ENCODE measurements at regions of chr16 and their contacts with region 1.

Region 1: DNA sequence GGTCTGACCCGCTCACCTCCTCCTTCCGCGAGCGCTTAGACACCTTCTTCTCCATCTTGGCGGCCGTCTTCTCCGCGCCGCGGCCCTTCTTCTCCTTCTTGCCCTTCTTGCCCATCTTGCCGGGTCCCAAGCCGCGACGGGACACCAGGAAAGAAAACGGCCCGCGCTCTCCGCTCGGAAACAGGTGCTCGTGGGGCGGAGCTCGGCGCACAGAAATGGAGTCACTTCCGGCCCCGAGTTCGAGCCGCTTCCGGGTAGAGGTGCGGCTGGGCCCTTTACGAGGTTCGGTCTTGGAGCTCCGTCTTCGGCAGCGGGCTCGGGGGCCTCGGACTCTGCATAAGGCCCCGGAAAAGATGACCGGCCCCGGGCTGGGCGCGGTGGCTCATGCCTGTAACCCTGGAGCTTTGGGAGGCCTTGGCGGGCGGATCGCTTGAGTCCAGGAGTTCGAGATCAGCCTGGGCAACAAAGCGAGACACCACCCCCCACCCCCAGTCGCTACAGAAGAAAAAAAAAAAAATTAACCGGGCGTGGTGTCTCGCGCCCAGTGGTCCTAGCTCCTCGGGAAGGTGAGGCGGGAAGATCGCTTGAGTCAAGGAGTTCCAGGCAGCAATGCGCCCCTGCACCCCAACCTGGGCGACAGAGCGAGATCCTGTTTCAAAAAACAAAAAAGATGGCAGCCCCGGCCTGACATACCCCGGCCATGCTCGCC is at the start of gene KLHDC4:
- DNase-seq: peak; percentile 90
- H3K4me3 Mint-ChIP-seq: peak within 1 kb of the TSS; percentile 100
- H3K27ac Mint-ChIP-seq: peak within 1 kb of the TSS; percentile 100
- H3K4me1 Mint-ChIP-seq: peaks cover 30% of the 10 kb centered on the region
- H3K27me3 Mint-ChIP-seq: peaks cover 1% of the 10 kb centered on the region
- total RNA-seq, gene KLHDC4: 85.6 and 93.7 TPM in 2 replicates

Region 2: DNA sequence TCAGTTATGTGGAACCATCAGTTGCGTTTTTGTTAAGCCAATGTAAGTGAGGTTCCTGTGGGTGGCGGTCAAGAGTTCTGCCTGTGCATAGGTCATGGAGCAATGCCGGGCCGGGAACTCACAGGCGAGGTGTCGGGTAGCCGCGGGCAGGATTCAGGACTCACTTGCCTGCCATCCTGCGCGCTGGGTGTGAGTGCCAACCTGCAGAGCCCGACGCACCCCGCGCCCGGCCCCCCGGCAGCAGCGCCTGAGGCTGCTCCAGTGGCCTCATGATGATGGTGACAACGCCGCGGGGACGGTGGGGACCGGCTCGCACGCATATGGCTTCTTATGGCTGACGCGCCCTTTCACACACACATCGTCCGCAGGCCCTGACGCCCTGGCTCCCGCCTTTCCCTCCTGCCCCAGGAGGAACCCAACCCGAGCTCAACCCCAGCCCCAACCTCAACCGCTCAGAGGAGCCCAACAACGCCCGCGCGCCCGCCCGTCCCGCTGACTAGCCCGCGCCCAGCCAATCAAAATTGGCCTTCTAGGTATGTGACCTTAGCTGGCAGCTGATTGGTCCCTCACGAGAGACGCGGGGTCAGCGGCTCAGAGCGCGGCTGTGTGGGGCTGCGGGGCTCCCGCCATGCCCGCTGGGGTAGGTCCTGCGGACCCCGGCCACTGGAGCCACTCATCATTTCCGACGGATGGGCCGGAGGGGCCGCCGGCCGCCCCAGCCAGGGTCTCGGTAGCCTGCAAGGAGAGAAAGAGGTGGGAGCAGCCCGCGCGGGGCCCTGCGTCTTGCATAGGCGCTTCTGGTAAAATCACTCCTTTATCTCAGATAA is 448.8 kb before region 1 on chr16 and contains the start of gene C16orf95:
- intact Hi-C with region 1: loop called (anchors 5 kb)
- DNase-seq: peak; percentile 95
- H3K4me3 Mint-ChIP-seq: peak within 1 kb of the TSS; percentile 94
- H3K27ac Mint-ChIP-seq: peak within 1 kb of the TSS; percentile 99
- H3K4me1 Mint-ChIP-seq: peaks cover 17% of the 10 kb centered on the region
- H3K27me3 Mint-ChIP-seq: no peaks in the 10 kb centered on the region
- total RNA-seq, gene C16orf95: 9.9 and 10.9 TPM in 2 replicates

Region 3: DNA sequence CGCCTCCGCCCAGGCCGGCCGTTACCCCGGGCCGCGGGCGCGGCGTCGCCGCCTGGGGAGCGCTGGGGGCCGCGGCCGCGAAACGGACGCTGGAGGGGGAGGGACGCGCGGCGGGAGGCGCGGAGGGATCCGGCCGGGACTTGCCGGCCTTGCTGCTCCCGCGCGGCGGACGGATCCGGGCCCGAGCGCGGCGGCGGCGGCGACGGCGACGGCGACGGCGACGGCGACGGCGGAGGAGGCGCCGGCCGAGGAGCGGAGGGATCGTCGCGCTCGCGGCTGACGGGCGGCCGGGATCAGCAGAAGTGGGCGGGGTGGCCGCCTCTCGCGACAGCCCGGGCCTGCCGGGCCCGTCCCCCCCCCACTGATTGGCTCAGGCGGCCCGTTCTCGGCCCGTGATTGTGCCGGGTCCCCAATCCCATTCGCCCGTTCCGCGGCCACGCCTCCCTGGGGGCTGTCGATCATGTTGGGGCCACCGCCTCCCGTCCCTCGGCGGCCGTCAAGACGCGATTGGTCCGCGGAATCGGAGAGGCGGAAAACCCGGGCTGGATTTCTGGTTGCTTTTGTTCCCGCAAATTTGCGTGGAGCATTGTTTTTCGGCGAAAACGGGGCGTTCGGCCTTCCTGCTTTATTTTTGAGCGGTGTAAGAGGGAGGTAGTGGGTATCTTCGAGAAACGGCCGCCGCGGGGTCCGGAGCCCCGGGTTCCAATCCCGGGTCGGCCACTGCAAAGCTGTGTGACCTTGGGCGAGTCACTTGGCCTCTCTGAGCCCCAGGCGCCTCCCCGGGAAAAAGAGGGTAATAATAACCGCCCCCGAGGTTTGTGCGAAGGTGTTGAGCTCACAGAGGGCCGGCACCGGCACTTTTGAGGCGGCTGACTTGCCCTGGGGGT is 273.0 kb before region 1 on chr16 and contains the start of gene ZCCHC14:
- intact Hi-C with region 1: loop called (anchors 2 kb)
- DNase-seq: peak; percentile 98
- H3K4me3 Mint-ChIP-seq: peak within 1 kb of the TSS; percentile 80
- H3K27ac Mint-ChIP-seq: peak within 1 kb of the TSS; percentile 82
- H3K4me1 Mint-ChIP-seq: peaks cover 53% of the 10 kb centered on the region
- H3K27me3 Mint-ChIP-seq: peaks cover 34% of the 10 kb centered on the region
- total RNA-seq, gene ZCCHC14: 9.9 and 11.0 TPM in 2 replicates

Region 4: DNA sequence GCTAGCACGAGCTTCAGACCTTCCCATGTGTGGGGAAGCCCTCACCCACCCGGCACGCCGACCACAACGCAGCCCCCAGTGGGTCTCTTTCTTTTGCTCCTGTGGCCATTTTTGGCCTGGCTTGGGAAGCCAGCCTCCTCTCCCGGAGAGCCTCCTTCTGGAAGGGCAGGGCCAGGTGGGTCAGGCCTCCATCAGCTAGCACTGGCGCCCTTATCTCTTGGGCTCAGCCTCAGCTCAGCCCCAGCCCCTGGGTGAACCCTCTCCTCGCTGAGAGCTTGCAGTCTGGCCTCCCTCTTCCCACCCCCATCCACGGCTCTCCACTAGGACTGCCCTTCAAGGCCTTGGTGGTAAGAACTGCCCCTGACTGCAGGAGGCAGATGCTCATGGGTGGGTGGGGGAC is 178.3 kb before region 1 on chr16:
- intact Hi-C with region 1: loop called (anchors 2 kb)
- DNase-seq: no peak
- H3K4me3 Mint-ChIP-seq: no peak overlapping the region
- H3K27ac Mint-ChIP-seq: no peak overlapping the region
- H3K4me1 Mint-ChIP-seq: no peaks in the 10 kb centered on the region
- H3K27me3 Mint-ChIP-seq: peaks cover 7% of the 10 kb centered on the region

Region 5: DNA sequence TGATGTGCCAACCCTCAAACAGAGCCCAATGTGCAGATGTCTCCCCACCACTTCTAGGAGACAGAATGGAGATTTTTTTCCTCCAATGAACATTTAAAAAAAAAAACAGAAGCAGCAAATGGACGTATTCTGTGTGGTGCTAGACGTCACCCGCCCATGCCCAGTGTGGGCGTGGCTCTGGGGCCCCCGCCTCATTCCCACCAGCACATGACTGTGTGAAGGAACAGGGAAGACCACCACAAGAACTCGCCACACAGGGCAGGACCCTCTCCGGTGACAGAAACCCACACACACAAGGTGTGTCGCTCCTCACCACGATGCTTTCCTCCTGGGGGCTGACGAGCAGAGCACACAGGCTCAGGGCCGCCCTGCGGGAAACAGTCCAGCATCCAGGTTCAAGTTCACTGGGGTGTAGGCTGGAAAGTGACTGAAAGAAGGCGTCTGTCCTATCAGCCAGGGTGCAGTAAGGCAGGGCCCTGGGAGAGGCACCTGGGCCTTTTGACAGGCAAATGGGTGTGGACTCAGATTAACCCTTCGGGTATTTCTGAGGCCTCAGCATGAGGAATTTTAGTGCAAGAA is 53.7 kb before region 1 on chr16:
- intact Hi-C with region 1: no loop called
- DNase-seq: no peak
- H3K4me3 Mint-ChIP-seq: no peak overlapping the region
- H3K27ac Mint-ChIP-seq: no peak overlapping the region
- H3K4me1 Mint-ChIP-seq: peaks cover 3% of the 10 kb centered on the region
- H3K27me3 Mint-ChIP-seq: no peaks in the 10 kb centered on the region

Region 6: DNA sequence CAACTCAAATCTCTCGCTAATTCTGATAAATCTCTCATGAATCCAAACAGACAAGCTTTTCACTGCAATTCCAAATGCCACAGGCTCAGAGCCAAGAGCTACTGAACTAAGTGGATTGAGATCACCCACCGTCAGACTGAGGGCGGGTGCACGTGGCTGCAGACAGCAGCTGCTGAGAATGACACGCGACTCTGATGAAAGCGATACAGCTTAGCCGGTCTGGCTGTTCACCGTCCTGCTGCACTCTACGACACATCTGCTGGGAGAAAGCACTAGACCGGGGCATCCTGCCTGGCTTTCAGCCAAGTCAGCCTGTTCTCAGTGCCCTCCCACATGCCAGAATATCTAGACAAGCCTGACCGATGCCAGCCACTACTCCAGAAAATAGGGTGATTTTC is 42.7 kb before region 1 on chr16:
- intact Hi-C with region 1: no loop called
- DNase-seq: no peak
- H3K4me3 Mint-ChIP-seq: no peak overlapping the region
- H3K27ac Mint-ChIP-seq: no peak overlapping the region
- H3K4me1 Mint-ChIP-seq: peaks cover 7% of the 10 kb centered on the region
- H3K27me3 Mint-ChIP-seq: no peaks in the 10 kb centered on the region

Region 7: DNA sequence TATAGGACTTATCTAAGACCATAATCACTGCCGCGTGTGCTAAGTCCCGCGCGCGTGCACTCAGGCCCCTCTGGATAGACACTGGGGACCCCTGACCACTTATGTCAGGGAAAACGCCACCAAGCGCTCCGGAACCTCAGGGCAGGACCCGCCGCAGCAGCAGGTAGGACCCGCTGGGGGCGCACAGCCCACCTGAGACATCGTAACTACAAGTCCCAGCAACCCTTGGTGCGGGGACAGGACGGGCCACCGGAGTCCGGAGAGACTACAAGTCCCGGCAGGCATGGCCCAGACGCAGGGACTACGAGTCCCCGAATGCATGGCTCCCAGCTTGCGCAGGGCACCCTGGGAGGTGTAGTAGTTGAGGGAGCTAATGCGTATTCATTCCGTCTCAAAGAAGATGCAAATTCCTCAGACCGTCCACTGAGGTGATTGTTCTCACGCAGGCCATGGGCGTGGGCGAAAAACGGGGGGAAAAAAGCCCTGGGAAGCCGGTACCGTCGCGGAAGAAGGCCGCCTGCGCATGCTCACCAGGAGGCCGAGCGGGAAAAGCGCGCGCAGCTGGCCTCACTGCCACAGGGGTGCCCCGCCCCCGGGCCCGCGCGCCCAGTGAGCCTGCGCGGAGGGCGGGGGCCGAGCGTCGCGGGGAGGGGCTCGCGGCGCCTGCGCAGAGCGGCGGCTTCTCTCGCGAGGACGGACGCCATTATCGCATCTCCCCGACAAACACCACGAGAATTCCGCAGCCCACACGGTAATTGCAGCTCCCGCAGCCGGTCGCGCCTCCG is 185.0 kb after region 1 on chr16 and contains the start of gene BANP:
- intact Hi-C with region 1: loop called (anchors 1 kb)
- DNase-seq: peak; percentile 95
- H3K4me3 Mint-ChIP-seq: peak within 1 kb of the TSS; percentile 94
- H3K27ac Mint-ChIP-seq: peak within 1 kb of the TSS; percentile 94
- H3K4me1 Mint-ChIP-seq: peaks cover 49% of the 10 kb centered on the region
- H3K27me3 Mint-ChIP-seq: no peaks in the 10 kb centered on the region
- total RNA-seq, gene BANP: 35.4 and 35.5 TPM in 2 replicates

Region 8: DNA sequence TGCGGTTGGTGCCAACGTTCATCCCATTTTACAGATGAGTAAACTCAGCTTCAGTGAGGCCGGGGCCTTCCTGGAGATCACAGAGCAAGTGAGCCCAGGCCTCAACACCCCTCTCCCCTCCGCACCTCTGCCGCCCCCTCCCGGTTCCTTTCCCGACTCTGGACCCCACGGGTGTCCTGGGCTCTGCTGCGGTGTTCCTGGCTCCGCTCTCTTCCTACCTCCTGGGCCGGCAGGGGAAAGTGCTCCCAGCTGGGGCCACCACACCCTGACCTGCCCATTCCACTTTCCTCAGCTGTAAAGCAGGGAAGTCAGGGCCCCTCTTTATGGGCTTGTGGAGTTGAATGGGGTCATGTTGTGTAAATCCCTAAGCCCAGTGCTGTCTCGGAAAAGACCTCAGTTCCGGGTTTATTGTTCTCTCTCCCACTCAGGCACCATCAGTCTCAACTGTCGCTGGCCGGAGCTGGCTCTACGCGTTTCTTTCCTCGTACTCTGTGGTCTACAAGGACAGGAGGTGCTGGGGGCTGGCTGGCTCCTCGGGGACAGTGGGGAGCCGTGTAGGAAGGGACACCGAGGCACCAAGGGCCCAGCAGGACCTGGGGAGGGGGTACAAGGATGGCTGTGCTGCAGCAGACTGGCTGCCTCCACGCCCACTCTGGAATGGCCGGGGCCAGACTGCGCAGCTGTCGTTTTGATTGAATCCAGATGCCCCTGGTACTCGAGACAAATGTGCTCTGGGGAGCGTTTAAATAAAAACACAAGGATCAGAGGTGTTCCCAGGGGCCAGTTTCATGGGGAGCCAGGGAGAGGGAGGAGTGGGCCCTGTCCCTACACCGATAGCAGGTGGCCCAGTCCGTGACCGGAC is 1306.0 kb after region 1 on chr16:
- intact Hi-C with region 1: no loop called
- DNase-seq: no peak
- H3K4me3 Mint-ChIP-seq: no peak overlapping the region
- H3K27ac Mint-ChIP-seq: no peak overlapping the region
- H3K4me1 Mint-ChIP-seq: no peaks in the 10 kb centered on the region
- H3K27me3 Mint-ChIP-seq: no peaks in the 10 kb centered on the region

Measured in activated T-helper 1 cell treated with anti-CD3 and anti-CD28 coated beads, Interleukin-12 subunit alpha, Interleukin-12 subunit beta, Interleukin-2, Interleukin-4 antibody, amounts not matched to agents 30 ng/mL and 10 ng/mL and 1 ng/mL, durations not matched to agents 14 hours and 24 hours and 36 hours (primary cell).